Activated CD4-positive, alpha-beta T cell treated with anti-CD3 and anti-CD28 coated beads, Interleukin-2, amount 10 ng/mL, durations not matched to agents 24 days and 14 days (primary cell): ENCODE measurements at regions of chr18 and their contacts with region 1.

Region 1: DNA sequence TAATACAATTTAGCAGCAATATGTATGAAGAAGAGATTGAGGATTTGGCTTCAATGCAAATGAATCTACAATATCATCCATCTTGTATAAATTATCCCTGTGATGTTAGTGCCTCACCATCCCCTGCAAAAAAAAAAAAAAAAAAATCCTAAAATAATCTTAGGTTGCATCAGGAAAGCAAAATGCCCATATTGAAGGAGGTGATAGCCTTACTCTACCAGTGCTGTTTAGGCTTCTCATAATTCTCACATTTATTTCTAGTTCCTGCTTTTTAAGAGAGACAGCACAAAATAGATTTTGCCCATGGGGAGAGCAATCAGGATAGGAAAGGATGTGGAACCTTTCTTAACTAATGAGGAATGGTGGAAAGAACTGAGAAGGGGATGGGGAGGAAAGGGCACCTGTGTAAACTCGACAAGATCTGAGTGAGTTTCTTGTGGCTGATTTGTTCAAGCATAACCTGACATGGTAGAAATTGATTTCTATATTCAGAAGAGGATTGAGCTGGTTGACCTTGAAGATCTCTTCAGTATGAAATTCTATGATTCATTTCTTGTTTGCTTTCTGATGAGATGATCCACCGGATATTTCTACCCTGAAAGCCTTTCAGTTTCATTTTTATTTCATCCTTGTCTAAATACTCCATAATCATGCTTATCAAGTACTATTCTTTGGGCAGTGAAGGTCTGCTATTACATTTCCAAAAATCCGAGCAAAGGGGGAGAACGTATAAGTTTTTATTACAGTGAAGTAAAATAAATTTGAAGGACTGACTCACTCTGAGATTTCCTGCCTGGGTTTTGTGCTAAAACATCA is 391.2 kb downstream of the PTPRM start:
- DNase-seq: peak; percentile 58
- H3K4me3 Mint-ChIP-seq: peak overlapping the region; percentile 58
- H3K27ac Mint-ChIP-seq: peak overlapping the region; percentile 85
- H3K4me1 Mint-ChIP-seq: peaks cover 24% of the 10 kb centered on the region
- H3K27me3 Mint-ChIP-seq: no peaks in the 10 kb centered on the region

Region 2: GRCh38 chr18:8052237-8052701 is 94.0 kb after region 1 on chr18:
- intact Hi-C with region 1: loop called (anchors 5 kb)
- DNase-seq: peak; percentile 57
- H3K4me3 Mint-ChIP-seq: no peak overlapping the region
- H3K27ac Mint-ChIP-seq: no peak overlapping the region
- H3K4me1 Mint-ChIP-seq: peaks cover 3% of the 10 kb centered on the region
- H3K27me3 Mint-ChIP-seq: no peaks in the 10 kb centered on the region